PC-3 (cell line): ENCODE measurements at regions of chr2 and their contacts with region 1.

Region 1: GRCh38 chr2:185219996-185220395 is 518.6 kb upstream of the FSIP2 start:
- DNase-seq: peak; percentile 78
- ATAC-seq: peak; percentile 99
- H3K4me3 ChIP-seq: no peak overlapping the region
- H3K27ac ChIP-seq: no peak overlapping the region
- H3K4me1 ChIP-seq: peaks cover 23% of the 10 kb centered on the region
- H3K27me3 ChIP-seq: no peaks in the 10 kb centered on the region
- CTCF ChIP-seq: no peak

Region 2: DNA sequence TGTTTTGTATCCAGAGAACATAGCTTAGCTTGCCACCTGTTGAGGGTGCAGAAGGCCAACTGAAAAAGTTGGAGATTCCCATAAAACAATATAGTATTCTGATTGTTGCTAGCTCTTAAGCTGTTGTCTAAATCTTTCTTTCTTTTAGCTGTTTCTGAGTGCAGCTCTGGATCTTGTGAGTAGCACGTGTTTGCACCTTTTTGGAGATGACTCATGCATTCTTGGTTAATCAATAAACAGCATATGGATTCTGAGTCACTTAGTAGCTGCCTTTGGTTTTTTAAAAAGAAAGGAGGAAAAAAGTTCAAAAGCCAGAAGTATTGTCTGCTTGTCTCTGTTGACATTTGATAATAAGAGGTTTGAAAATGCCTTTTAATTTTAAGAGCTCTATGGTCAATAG is 35.6 kb after region 1 on chr2:
- CTCF ChIA-PET with region 1: no interaction called
- POLR2A ChIA-PET with region 1: no interaction called
- intact Hi-C with region 1: loop called (anchors 5 kb)
- DNase-seq: peak; percentile 56
- ATAC-seq: peak; percentile 50
- H3K4me3 ChIP-seq: no peak overlapping the region
- H3K27ac ChIP-seq: no peak overlapping the region
- H3K4me1 ChIP-seq: peaks cover 6% of the 10 kb centered on the region; the same call in 1 of the 2 replicates
- H3K27me3 ChIP-seq: no peaks in the 10 kb centered on the region
- CTCF ChIP-seq: no peak

Region 3: GRCh38 chr2:185360776-185361175 is 140.8 kb after region 1 on chr2:
- CTCF ChIA-PET with region 1: no interaction called
- POLR2A ChIA-PET with region 1: no interaction called
- intact Hi-C with region 1: no loop called
- DNase-seq: no peak
- ATAC-seq: no peak
- H3K4me3 ChIP-seq: no peak overlapping the region
- H3K27ac ChIP-seq: no peak overlapping the region
- H3K4me1 ChIP-seq: no peaks in the 10 kb centered on the region
- H3K27me3 ChIP-seq: no peaks in the 10 kb centered on the region
- CTCF ChIP-seq: no peak